Common myeloid progenitor, CD34-positive (primary cell): ENCODE measurements at regions of chr2 and their contacts with region 1.

Region 1: GRCh38 chr2:159904127-159904958 is 106.3 kb upstream of the CD302 start:
- DNase-seq: peak; percentile 79 to 91 (median 83)
- H3K4me3 ChIP-seq: peak within 1 kb of the TSS; percentile 55 to 94 (median 85)
- H3K27ac ChIP-seq: peak within 1 kb of the TSS; percentile 64 to 73
- H3K4me1 ChIP-seq: peaks cover 5 to 27% (median 23%) of the 10 kb centered on the region in 4 experiments
- H3K27me3 ChIP-seq: no peaks in the 10 kb centered on the region

Region 2: GRCh38 chr2:159921752-159922404 is 17.5 kb after region 1 on chr2:
- CTCF ChIA-PET with region 1: interaction called, 127 read pairs
- POLR2A ChIA-PET with region 1: no interaction called
- DNase-seq: peak; percentile 61 to 84 (median 82)
- H3K4me3 ChIP-seq: peak overlapping the region in 2 of 7 experiments; percentile 7 to 22
- H3K27ac ChIP-seq: no peak overlapping the region
- H3K4me1 ChIP-seq: peaks cover 0 to 5% (median 3%) of the 10 kb centered on the region in 4 experiments
- H3K27me3 ChIP-seq: no peaks in the 10 kb centered on the region

Region 3: DNA sequence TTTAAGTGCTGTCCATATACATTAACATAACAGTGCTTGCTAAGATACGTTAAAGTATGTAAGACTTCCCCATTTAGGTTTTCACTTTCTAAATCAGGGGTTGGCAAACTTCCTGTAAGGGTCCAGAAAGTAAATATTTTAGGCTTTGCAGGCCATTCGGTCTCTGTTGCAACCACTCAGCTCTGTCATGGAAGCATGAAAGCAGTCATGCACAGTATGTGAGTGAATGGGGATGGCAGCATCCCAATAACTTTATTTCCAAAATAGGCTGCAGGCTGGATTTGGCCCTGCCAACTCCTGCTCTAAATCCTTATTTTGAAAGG is 29.3 kb after region 1 on chr2:
- CTCF ChIA-PET with region 1: no interaction called
- POLR2A ChIA-PET with region 1: no interaction called
- DNase-seq: peak; percentile 31 to 76 (median 74)
- H3K4me3 ChIP-seq: peak overlapping the region in 2 of 7 experiments; percentile 2 to 54
- H3K27ac ChIP-seq: no peak overlapping the region
- H3K4me1 ChIP-seq: peaks cover 14 to 24% (median 19%) of the 10 kb centered on the region in 4 experiments
- H3K27me3 ChIP-seq: no peaks in the 10 kb centered on the region